ENCODE measurements at regions of chr14 and their contacts with region 1.

Region 1: DNA sequence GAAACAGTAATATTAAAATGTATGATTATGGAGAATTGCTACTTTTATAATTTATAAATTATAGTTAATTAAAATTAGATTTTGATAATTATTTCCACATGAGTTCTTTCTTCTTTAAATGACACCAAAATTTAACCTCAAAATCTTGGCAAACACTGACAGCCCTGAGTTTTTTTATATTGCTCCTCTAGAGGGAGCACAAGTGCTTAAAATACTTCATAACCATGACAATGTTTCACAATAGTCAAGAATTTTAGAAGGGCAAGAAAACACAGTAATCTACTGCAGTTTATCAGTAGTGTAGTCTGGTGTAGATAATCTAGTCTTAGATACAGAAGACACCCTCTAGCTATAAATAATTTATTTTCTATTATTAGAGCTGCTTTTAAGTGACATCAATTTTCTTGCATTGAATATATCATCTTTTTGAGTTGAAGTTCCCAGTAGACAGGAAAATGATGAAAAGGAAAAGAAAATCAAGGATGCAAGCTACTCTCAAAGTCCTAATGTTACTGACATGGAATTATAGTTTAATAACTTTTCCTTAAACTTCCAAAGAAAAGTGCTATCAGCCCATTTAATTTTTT is 14.3 kb upstream of the PTGER2 start:
- DNase-seq: peak in 1 of 2 experiments; percentile 36
- H3K4me3 ChIP-seq: no peak overlapping the region
- H3K4me3 Mint-ChIP-seq: no peak overlapping the region
- H3K27ac Mint-ChIP-seq: no peak overlapping the region
- H3K4me1 ChIP-seq: no peaks in the 10 kb centered on the region
- H3K4me1 Mint-ChIP-seq: no peaks in the 10 kb centered on the region
- H3K27me3 ChIP-seq: no peaks in the 10 kb centered on the region
- H3K27me3 Mint-ChIP-seq: peaks cover 13% of the 10 kb centered on the region
- CTCF ChIP-seq: peak; percentile 66 to 76

Region 2: GRCh38 chr14:52473557-52473956 is 173.8 kb after region 1 on chr14:
- CTCF ChIA-PET with region 1: no interaction called
- POLR2A ChIA-PET with region 1: no interaction called
- intact Hi-C with region 1: loop called (anchors 1 kb)
- DNase-seq: peak in 1 of 2 experiments; percentile 22
- H3K4me3 ChIP-seq: no peak overlapping the region
- H3K4me3 Mint-ChIP-seq: no peak overlapping the region
- H3K27ac Mint-ChIP-seq: no peak overlapping the region
- H3K4me1 ChIP-seq: no peaks in the 10 kb centered on the region
- H3K4me1 Mint-ChIP-seq: no peaks in the 10 kb centered on the region
- H3K27me3 ChIP-seq: no peaks in the 10 kb centered on the region
- H3K27me3 Mint-ChIP-seq: no peaks in the 10 kb centered on the region
- CTCF ChIP-seq: peak; percentile 3 to 23

Measured in Caco-2 (cell line).